ENCODE measurements at regions of chr7 and their contacts with region 1.

Region 1: GRCh38 chr7:48046458-48046857 is 11.1 kb downstream of the C7orf57 start:
- DNase-seq: no peak
- H3K4me3 ChIP-seq: no peak overlapping the region
- H3K27ac ChIP-seq: no peak overlapping the region
- H3K4me1 ChIP-seq: no peaks in the 10 kb centered on the region; the same call in 1 of the 2 replicates
- H3K27me3 ChIP-seq: no peaks in the 10 kb centered on the region
- CTCF ChIP-seq: no peak

Region 2: DNA sequence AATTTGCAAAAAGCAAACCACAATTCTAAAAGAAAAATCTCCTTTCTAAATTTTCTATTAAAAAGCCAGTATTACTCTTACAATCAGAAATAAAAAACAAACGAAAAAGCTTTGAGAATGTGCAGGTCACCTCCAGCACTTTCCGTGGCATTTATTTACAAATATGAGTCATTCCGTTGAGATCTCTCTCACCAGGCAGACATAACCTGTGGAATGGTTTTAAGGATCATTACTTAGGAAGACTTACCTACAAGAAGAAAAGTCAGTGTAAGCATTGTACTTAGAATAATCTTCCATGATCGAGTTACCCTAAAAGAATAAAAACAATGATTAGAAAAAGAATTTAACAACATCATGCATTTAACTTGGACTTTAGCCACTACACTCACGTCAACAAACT is 20.8 kb before region 1 on chr7:
- CTCF ChIA-PET with region 1: no interaction called
- POLR2A ChIA-PET with region 1: interaction called, 11 read pairs
- intact Hi-C with region 1: no loop called
- DNase-seq: peak in 1 of 2 experiments; percentile 55
- H3K4me3 ChIP-seq: no peak overlapping the region
- H3K27ac ChIP-seq: no peak overlapping the region
- H3K4me1 ChIP-seq: peaks cover 11% of the 10 kb centered on the region
- H3K27me3 ChIP-seq: no peaks in the 10 kb centered on the region
- CTCF ChIP-seq: no peak

Region 3: GRCh38 chr7:48094751-48095562 is 48.5 kb after region 1 on chr7:
- CTCF ChIA-PET with region 1: interaction called, 15 read pairs
- POLR2A ChIA-PET with region 1: no interaction called
- intact Hi-C with region 1: no loop called
- DNase-seq: peak; percentile 42 to 95
- H3K4me3 ChIP-seq: peak overlapping the region; percentile 26; the same call in 1 of the 2 replicates
- H3K27ac ChIP-seq: peak overlapping the region; percentile 98
- H3K4me1 ChIP-seq: peaks cover 60% of the 10 kb centered on the region
- H3K27me3 ChIP-seq: no peaks in the 10 kb centered on the region
- CTCF ChIP-seq: no peak

Region 4: DNA sequence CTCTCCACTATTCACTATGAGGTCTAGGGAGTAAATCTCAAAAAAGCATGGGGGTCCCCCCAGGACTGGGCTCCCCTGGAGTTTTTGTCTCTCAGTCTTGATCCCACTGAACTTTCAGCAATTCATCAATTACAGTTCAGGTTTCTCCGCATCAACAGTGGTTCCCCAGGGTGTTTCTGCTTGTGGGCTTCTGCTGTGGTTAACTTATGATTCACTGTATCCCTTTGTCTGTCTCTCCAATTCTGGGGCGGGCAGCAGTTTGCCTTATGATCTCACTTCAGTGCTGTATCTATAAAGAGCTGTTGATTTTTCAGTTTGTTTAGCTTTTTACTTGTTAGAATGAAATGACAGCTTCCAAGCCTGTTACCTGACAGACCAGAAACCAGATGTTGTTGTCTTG is 735.3 kb after region 1 on chr7:
- CTCF ChIA-PET with region 1: no interaction called
- POLR2A ChIA-PET with region 1: no interaction called
- intact Hi-C with region 1: no loop called
- DNase-seq: no peak
- H3K4me3 ChIP-seq: no peak overlapping the region
- H3K27ac ChIP-seq: no peak overlapping the region
- H3K4me1 ChIP-seq: no peaks in the 10 kb centered on the region
- H3K27me3 ChIP-seq: no peaks in the 10 kb centered on the region
- CTCF ChIP-seq: no peak